HepG2 (cell line): ENCODE measurements at regions of chr4 and their contacts with region 1.

Region 1: GRCh38 chr4:139619644-139620043 is 46.0 kb upstream of the MGST2 start:
- DNase-seq: peak; percentile 47
- ATAC-seq: peak; percentile 95
- H3K4me3 ChIP-seq: no peak overlapping the region
- H3K27ac ChIP-seq: no peak overlapping the region
- H3K4me1 ChIP-seq: no peaks in the 10 kb centered on the region
- H3K27me3 ChIP-seq: peaks cover 0 to under 1% of the 10 kb centered on the region in 2 experiments; a peak in 1 of 5 replicates
- CTCF ChIP-seq: peak; percentile 67
- EP300 ChIP-seq: no peak
- POLR2A ChIP-seq: no peak
- RAD21 ChIP-seq: no peak

Region 2: GRCh38 chr4:139633661-139634060 is 14.0 kb after region 1 on chr4:
- CTCF ChIA-PET with region 1: interaction called, 13 read pairs
- POLR2A ChIA-PET with region 1: no interaction called
- in situ Hi-C with region 1: no loop called
- intact Hi-C with region 1: loop called (anchors 1 kb)
- DNase-seq: peak; percentile 38
- ATAC-seq: peak; percentile 93
- H3K4me3 ChIP-seq: peak overlapping the region in 2 of 3 experiments; percentile 11 to 31; a peak in 3 of 6 replicates
- H3K27ac ChIP-seq: no peak overlapping the region
- H3K4me1 ChIP-seq: peaks cover 41% of the 10 kb centered on the region
- H3K27me3 ChIP-seq: no peaks in the 10 kb centered on the region
- CTCF ChIP-seq: peak; percentile 77
- EP300 ChIP-seq: no peak
- POLR2A ChIP-seq: no peak
- RAD21 ChIP-seq: peak; percentile 67

Region 3: DNA sequence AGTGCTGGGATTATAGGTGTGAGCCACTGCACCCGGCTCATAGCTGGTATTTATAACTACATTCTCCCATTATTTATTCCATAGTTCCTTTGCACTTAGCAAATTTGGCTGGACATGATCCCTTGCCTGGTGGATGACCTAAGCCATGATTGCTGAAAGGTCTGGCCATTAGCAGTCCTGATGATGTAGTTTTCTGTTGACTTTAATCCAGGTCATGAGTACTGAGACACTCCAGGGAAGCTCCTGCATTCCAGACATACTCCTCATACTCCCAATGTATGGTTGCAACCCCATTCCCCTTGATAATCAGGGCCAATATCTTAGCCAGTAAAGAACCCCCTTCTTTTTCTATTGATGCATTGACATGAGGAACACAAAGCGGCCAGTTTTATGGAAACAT is 21.6 kb after region 1 on chr4:
- CTCF ChIA-PET with region 1: no interaction called
- POLR2A ChIA-PET with region 1: no interaction called
- in situ Hi-C with region 1: no loop called
- intact Hi-C with region 1: loop called (anchors 1 kb)
- DNase-seq: peak; percentile 69
- ATAC-seq: peak; percentile 86
- H3K4me3 ChIP-seq: no peak overlapping the region
- H3K27ac ChIP-seq: no peak overlapping the region
- H3K4me1 ChIP-seq: peaks cover 11% of the 10 kb centered on the region
- H3K27me3 ChIP-seq: peaks cover 0 to 1% of the 10 kb centered on the region in 2 experiments; a peak in 1 of 5 replicates
- CTCF ChIP-seq: no peak
- EP300 ChIP-seq: no peak
- POLR2A ChIP-seq: no peak
- RAD21 ChIP-seq: no peak

Region 4: GRCh38 chr4:139651282-139652194 is 31.9 kb after region 1 on chr4:
- CTCF ChIA-PET with region 1: interaction called, 14 read pairs
- POLR2A ChIA-PET with region 1: no interaction called
- in situ Hi-C with region 1: no loop called
- intact Hi-C with region 1: loop called (anchors 1 kb)
- DNase-seq: peak; percentile 56
- ATAC-seq: peak; percentile 77
- H3K4me3 ChIP-seq: no peak overlapping the region
- H3K27ac ChIP-seq: no peak overlapping the region
- H3K4me1 ChIP-seq: peaks cover 29% of the 10 kb centered on the region
- H3K27me3 ChIP-seq: no peaks in the 10 kb centered on the region
- CTCF ChIP-seq: peak; percentile 88
- EP300 ChIP-seq: no peak; a peak in 1 of 4 replicates
- POLR2A ChIP-seq: no peak
- RAD21 ChIP-seq: peak; percentile 54; the same call in 1 of the 2 replicates

Region 5: DNA sequence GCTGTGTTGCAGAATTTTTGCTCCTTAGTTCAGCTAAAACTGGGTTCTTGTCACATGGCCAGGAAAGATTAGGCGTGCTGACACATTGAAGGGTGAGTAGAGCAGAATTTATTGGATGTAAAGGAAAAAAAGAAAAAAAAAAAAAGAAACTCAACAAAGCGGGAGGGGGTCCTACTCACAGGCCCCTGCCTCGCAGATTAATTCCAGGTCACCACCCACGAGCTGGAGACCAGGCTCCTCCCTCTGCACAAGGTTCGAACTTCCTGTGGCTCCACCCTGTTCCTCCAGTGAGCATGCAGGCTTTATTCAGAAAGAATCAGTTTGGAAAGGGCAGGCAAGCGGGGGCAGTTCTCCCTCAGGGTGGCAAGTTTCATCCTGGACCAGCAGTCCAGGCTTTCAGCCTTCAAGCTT is 63.1 kb after region 1 on chr4:
- CTCF ChIA-PET with region 1: no interaction called
- POLR2A ChIA-PET with region 1: no interaction called
- in situ Hi-C with region 1: no loop called
- intact Hi-C with region 1: no loop called
- DNase-seq: no peak
- ATAC-seq: no peak
- H3K4me3 ChIP-seq: no peak overlapping the region
- H3K27ac ChIP-seq: peak overlapping the region; percentile 38
- H3K4me1 ChIP-seq: peaks cover 99% of the 10 kb centered on the region
- H3K27me3 ChIP-seq: no peaks in the 10 kb centered on the region
- CTCF ChIP-seq: no peak
- EP300 ChIP-seq: no peak
- POLR2A ChIP-seq: no peak
- RAD21 ChIP-seq: no peak